ENCODE measurements at regions of chr2 and their contacts with region 1.

Region 1: DNA sequence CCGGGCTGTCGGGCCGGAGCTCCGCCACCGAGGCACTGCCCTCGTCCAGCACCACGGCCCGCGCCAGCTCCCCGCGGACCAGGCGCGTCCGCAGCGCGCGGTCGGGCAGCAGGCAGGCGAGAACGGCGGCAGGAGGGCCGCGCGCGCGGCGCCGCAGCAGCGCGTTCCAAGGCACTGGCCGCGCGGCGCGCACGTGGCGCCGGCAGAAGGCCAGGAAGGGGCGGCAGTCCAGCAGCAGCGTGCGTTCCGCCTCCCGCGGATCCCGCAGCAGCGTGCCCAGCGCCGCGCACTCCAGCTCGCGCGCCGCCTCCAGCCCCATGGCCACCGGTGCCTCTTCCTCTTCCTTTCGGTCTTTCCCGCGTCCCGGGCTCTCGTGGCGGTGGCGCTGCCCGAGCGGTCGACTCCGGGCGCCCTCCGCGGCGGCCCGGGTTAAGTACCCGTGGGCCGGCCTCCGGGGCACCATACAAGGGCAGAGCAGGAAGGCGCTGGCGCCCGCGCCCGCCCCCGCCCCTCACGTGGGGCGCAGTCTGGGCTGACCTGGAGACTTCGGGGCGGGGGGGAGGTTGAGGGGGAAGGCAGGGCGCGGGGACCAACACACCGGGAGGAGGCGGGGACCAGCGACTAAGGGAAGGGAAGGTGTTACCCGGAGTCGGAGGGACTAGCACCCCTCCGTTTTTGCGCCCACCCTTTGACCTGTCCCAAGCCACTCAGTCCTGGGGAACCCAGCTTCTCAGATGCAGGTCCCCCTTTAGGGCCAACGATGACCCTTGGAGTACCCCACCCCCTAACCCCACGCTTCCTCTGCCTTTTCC is at the start of gene DUSP2:
- DNase-seq: peak; percentile 95
- H3K4me3 Mint-ChIP-seq: peak within 1 kb of the TSS; percentile 96
- H3K27ac Mint-ChIP-seq: peak within 1 kb of the TSS; percentile 99
- H3K4me1 Mint-ChIP-seq: peaks cover 52% of the 10 kb centered on the region
- H3K27me3 Mint-ChIP-seq: no peaks in the 10 kb centered on the region
- total RNA-seq, gene DUSP2: 429 to 463 TPM

Region 2: DNA sequence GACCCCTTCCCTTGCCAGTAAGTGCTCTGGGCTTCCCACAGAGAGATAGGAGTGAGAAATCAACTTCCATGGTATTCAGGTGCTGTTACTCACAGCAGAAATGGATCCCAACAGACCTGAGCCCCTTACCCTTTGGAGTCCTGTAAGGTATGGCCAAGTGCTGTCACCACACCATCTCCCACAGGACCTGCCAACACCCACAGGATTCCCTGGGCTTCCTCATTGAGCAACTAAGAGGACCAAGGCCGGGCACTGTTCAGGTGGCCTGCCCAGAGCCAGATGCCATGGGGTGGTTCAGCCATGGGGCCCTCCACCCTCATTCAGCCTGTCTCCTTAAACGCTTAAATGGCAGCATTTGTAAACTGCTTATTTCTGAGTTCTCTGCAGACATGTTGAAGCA is 387.3 kb before region 1 on chr2:
- CTCF ChIA-PET with region 1: no interaction called
- intact Hi-C with region 1: no loop called
- DNase-seq: no peak
- H3K4me3 Mint-ChIP-seq: no peak overlapping the region
- H3K27ac Mint-ChIP-seq: no peak overlapping the region
- H3K4me1 Mint-ChIP-seq: no peaks in the 10 kb centered on the region
- H3K27me3 Mint-ChIP-seq: no peaks in the 10 kb centered on the region

Region 3: GRCh38 chr2:96131152-96131812 is 14.0 kb before region 1 on chr2:
- CTCF ChIA-PET with region 1: interaction called, 11 read pairs
- intact Hi-C with region 1: no loop called
- DNase-seq: peak; percentile 58
- H3K4me3 Mint-ChIP-seq: no peak overlapping the region
- H3K27ac Mint-ChIP-seq: peak overlapping the region; percentile 84
- H3K4me1 Mint-ChIP-seq: peaks cover 16% of the 10 kb centered on the region
- H3K27me3 Mint-ChIP-seq: no peaks in the 10 kb centered on the region

Region 4: DNA sequence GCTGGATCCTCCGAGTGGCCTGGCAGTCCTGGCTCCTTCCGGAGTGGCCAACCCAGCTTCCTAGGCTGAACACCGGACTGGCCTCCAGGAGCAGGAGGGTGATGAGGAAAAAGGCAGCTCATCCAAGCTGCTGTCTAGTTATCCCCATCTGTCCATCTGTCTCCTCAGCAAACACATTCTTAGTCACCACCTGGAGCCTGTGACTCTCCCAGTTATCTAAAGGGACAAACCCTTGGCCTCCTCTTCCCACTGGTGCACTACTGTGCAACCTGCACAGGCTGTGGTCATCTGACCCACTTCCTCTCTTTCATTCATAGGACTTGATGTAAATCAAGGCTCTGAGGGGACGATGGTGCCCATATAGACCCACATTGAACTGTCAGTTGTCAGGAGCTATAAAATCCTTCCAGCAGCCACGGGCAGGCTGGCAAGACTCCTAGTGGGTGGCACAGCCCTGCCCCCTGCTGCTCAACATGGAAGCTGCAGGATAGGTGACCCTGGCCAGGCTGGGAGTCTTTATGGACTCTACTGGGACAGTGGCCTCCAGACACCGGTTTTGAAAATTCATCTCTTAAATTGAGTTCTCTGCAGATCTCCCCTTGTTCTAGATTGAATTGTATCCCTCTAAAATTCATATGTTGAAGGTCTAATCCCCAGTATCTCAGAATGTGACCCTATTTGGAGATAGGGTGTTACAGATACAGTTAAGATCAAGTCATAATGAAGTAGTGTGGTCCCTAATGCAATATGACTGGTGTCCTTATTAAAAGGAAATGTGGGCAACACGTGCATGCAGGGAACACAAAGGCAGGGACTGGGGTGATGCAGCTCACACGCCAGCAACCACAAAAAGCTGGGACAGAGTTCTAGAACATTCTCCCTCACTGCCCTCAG is 29.3 kb after region 1 on chr2:
- CTCF ChIA-PET with region 1: interaction called, 482 read pairs
- intact Hi-C with region 1: no loop called
- DNase-seq: peak; percentile 92
- H3K4me3 Mint-ChIP-seq: no peak overlapping the region
- H3K27ac Mint-ChIP-seq: peak overlapping the region; percentile 52
- H3K4me1 Mint-ChIP-seq: peaks cover 17% of the 10 kb centered on the region
- H3K27me3 Mint-ChIP-seq: no peaks in the 10 kb centered on the region

Region 5: GRCh38 chr2:96265840-96266679 is 120.8 kb after region 1 on chr2 and contains the starts of genes CIAO1 and TMEM127:
- CTCF ChIA-PET with region 1: interaction called, 3 read pairs
- intact Hi-C with region 1: loop called (anchors 1 kb)
- DNase-seq: peak; percentile 99
- H3K4me3 Mint-ChIP-seq: peak within 1 kb of the TSS; percentile 99
- H3K27ac Mint-ChIP-seq: peak within 1 kb of the TSS; percentile 86
- H3K4me1 Mint-ChIP-seq: peaks cover 47% of the 10 kb centered on the region
- H3K27me3 Mint-ChIP-seq: no peaks in the 10 kb centered on the region
- total RNA-seq, gene CIAO1: 59.9 to 62.2 TPM
- total RNA-seq, gene TMEM127: 12.9 to 16.1 TPM

Region 6: GRCh38 chr2:96336104-96336775 is 191.0 kb after region 1 on chr2:
- CTCF ChIA-PET with region 1: no interaction called
- intact Hi-C with region 1: loop called (anchors 2 kb)
- DNase-seq: no peak
- H3K4me3 Mint-ChIP-seq: peak overlapping the region; percentile 87
- H3K27ac Mint-ChIP-seq: peak overlapping the region; percentile 72
- H3K4me1 Mint-ChIP-seq: peaks cover 51% of the 10 kb centered on the region
- H3K27me3 Mint-ChIP-seq: no peaks in the 10 kb centered on the region

Region 7: DNA sequence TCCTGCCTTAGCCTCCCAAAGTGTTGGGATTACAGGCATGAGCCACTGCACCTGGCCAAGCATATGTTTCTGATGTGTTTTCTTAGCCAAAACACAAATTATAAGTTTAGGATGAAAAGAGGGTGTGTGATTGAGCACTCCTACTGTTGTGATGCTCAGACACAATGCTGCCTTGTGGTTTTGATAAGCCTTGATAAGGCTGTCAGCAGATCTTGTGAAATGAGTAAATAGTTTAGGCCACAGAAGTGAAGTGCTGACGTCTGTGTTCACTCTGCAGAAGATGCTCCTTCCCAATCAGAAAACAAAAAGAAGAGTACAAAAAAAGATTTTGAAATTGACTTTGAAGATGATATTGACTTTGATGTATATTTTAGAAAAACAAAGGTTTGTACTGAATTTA is 214.6 kb after region 1 on chr2:
- CTCF ChIA-PET with region 1: no interaction called
- intact Hi-C with region 1: no loop called
- DNase-seq: no peak
- H3K4me3 Mint-ChIP-seq: no peak overlapping the region
- H3K27ac Mint-ChIP-seq: no peak overlapping the region
- H3K4me1 Mint-ChIP-seq: no peaks in the 10 kb centered on the region
- H3K27me3 Mint-ChIP-seq: no peaks in the 10 kb centered on the region

Region 8: GRCh38 chr2:96536445-96537065 is 391.3 kb after region 1 on chr2 and contains the start of gene ARID5A:
- CTCF ChIA-PET with region 1: no interaction called
- intact Hi-C with region 1: loop called (anchors 1 kb)
- DNase-seq: peak; percentile 96
- H3K4me3 Mint-ChIP-seq: peak within 1 kb of the TSS; percentile 96
- H3K27ac Mint-ChIP-seq: peak within 1 kb of the TSS; percentile 99
- H3K4me1 Mint-ChIP-seq: peaks cover 60% of the 10 kb centered on the region
- H3K27me3 Mint-ChIP-seq: no peaks in the 10 kb centered on the region
- total RNA-seq, gene ARID5A: 349 to 351 TPM